Heart right ventricle (tissue), 16 donors: ENCODE measurements at regions of chr2 and their contacts with region 1.

Region 1: GRCh38 chr2:12819103-12819475 is 102.4 kb downstream of the TRIB2 start:
- DNase-seq: peak in 1 of 2 donors; percentile 93
- ATAC-seq: peak; percentile 95 to 97 (median 96)
- H3K4me3 ChIP-seq: peak overlapping the region in 1 of 10 donors; percentile 11
- H3K27ac ChIP-seq: peak overlapping the region; percentile 70 to 92 (median 87)
- H3K4me1 ChIP-seq: peaks cover 16 to 70% (median 44%) of the 10 kb centered on the region in 9 donors
- H3K27me3 ChIP-seq: no peaks in the 10 kb centered on the region
- CTCF ChIP-seq: no peak

Region 2: GRCh38 chr2:12844511-12844910 is 25.4 kb after region 1 on chr2:
- intact Hi-C with region 1: loop called in 1 of 10 experiments (anchors 1 kb)
- DNase-seq: peak; percentile 61 to 66
- ATAC-seq: peak; percentile 58 to 93 (median 90)
- H3K4me3 ChIP-seq: peak overlapping the region in 2 of 10 donors; percentile 9 to 13
- H3K27ac ChIP-seq: peak overlapping the region in 9 of 10 donors; percentile 24 to 77 (median 42)
- H3K4me1 ChIP-seq: peaks cover 0 to 15% (median 4%) of the 10 kb centered on the region in 9 donors
- H3K27me3 ChIP-seq: no peaks in the 10 kb centered on the region
- CTCF ChIP-seq: no peak

Region 3: GRCh38 chr2:12918835-12919445 is 99.9 kb after region 1 on chr2:
- intact Hi-C with region 1: loop called in 3 of 10 experiments (anchors 5 to 10 kb)
- DNase-seq: peak; percentile 61 to 63
- ATAC-seq: peak; percentile 80 to 98 (median 93)
- H3K4me3 ChIP-seq: peak overlapping the region in 1 of 10 donors; percentile 2
- H3K27ac ChIP-seq: peak overlapping the region; percentile 27 to 86 (median 76)
- H3K4me1 ChIP-seq: peaks cover 0 to 29% (median 21%) of the 10 kb centered on the region in 9 donors
- H3K27me3 ChIP-seq: no peaks in the 10 kb centered on the region
- CTCF ChIP-seq: no peak

Region 4: DNA sequence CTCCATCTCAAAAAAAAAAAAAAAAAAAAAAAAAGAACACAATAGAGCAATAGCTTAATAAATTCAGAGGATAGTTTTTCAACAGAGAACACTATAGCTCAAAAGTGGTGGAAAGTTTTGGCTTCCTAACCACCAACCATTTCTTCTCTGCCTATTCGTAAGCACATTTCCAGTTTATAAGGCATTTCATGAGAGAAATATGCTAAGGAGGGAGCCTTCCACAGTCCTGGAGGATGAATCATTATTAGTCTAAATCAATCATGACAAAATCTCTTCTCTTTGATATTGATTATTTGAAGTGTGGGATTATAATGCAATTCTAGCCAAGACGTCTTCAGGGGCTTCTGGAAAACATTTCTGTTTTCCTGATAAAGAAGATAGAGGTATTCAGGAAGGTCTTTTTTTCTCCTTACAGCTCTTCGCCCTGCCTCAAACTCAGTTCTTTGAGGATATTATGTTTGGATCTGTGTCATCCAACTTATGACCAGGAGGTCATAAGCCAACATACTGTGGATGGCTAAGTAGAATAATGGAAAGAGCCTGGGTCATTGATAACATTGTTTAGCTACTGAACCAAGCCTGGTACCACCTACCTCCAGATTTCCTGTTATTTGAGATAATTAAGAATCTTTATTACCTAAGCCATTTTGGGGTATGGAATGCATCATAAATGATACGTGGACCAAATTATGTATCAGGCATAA is 105.0 kb after region 1 on chr2:
- intact Hi-C with region 1: loop called in 3 of 10 experiments (anchors 5 to 10 kb)
- DNase-seq: no peak
- ATAC-seq: no peak
- H3K4me3 ChIP-seq: no peak overlapping the region
- H3K27ac ChIP-seq: no peak overlapping the region
- H3K4me1 ChIP-seq: peaks cover 4 to 27% (median 19%) of the 10 kb centered on the region in 9 donors
- H3K27me3 ChIP-seq: no peaks in the 10 kb centered on the region
- CTCF ChIP-seq: no peak